ENCODE measurements at regions of chr17 and their contacts with region 1.

Region 1: DNA sequence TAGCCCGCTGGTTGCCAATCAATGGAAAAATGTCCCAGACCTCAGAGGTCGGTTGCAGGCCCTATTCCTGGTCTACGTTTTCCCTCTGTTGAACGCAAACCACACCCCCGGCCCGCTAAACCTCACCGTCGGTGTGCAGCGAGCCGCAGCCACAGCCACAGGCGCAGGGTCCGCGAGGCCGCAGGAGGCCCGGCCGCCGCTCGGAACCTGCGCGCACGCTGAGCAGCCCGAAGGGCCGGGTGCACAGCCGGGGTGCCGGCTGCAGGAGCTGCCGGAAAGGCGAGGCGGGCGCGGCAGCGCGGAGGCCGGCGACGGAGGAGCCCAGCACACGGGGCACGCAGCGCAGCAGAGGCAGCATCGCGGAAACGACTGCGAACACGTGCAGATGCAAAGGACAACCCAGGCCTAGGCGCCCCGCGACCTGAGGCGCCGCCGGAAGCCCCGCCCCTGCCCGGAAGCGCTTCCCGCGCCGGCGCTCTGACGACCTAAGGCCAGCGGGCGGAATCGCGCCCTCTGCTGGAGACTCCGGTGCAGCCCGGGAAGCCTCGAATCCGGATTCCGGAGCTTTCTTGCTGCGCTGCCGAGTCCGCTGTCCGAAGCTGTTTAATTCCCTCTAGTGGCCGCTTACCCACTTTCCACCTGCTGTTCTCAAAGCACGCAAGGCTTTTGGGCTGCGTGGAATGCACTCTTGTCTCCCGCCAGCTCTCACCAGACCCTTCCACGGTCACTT is at the start of gene C1QBP:
- DNase-seq: peak; percentile 95
- H3K4me3 Mint-ChIP-seq: peak within 1 kb of the TSS; percentile 82
- H3K27ac Mint-ChIP-seq: peak within 1 kb of the TSS; percentile 83
- H3K4me1 Mint-ChIP-seq: peaks cover 43% of the 10 kb centered on the region
- H3K27me3 Mint-ChIP-seq: no peaks in the 10 kb centered on the region
- total RNA-seq, gene C1QBP: 342 TPM

Region 2: DNA sequence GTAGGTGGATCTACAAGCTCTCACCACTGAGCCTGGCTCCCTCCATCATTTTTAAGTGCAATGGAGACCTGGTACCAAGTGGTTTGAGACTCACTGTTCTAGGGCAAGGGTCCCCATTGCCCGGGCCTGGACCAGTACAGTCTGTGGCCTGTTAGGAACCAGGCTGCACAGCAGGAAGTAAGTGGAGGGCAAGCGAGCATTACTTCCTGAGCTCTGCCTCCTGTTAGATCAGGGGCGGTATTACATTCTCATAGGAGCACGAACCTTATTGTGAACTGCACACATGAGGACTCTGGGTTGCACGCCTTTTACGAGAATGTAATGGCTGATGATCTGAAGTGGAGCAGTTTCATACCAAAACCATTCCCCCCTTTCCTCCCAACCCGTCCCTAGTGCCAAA is 240.4 kb before region 1 on chr17:
- CTCF ChIA-PET with region 1: interaction called, 4 read pairs
- POLR2A ChIA-PET with region 1: no interaction called
- intact Hi-C with region 1: loop called (anchors 5 kb)
- DNase-seq: no peak
- H3K4me3 Mint-ChIP-seq: no peak overlapping the region
- H3K27ac Mint-ChIP-seq: no peak overlapping the region
- H3K4me1 Mint-ChIP-seq: no peaks in the 10 kb centered on the region
- H3K27me3 Mint-ChIP-seq: no peaks in the 10 kb centered on the region

Region 3: GRCh38 chr17:5281814-5282653 is 156.8 kb before region 1 on chr17 and contains the start of gene RABEP1:
- CTCF ChIA-PET with region 1: interaction called, 5 read pairs
- POLR2A ChIA-PET with region 1: interaction called, 12 read pairs
- intact Hi-C with region 1: no loop called
- DNase-seq: peak; percentile 96
- H3K4me3 Mint-ChIP-seq: peak within 1 kb of the TSS; percentile 85
- H3K27ac Mint-ChIP-seq: peak within 1 kb of the TSS; percentile 86
- H3K4me1 Mint-ChIP-seq: peaks cover 35% of the 10 kb centered on the region
- H3K27me3 Mint-ChIP-seq: no peaks in the 10 kb centered on the region
- total RNA-seq, gene RABEP1: 60.7 to 60.8 TPM

Region 4: GRCh38 chr17:5405400-5405799 is 33.5 kb before region 1 on chr17:
- CTCF ChIA-PET with region 1: interaction called, 14 read pairs
- POLR2A ChIA-PET with region 1: no interaction called
- intact Hi-C with region 1: no loop called
- DNase-seq: no peak
- H3K4me3 Mint-ChIP-seq: no peak overlapping the region
- H3K27ac Mint-ChIP-seq: no peak overlapping the region
- H3K4me1 Mint-ChIP-seq: peaks cover 18% of the 10 kb centered on the region
- H3K27me3 Mint-ChIP-seq: no peaks in the 10 kb centered on the region

Region 5: GRCh38 chr17:5419356-5419958 is 19.4 kb before region 1 on chr17 and contains the start of gene NUP88:
- CTCF ChIA-PET with region 1: interaction called, 26 read pairs
- POLR2A ChIA-PET with region 1: interaction called, 30 read pairs
- intact Hi-C with region 1: loop called (anchors 1 kb)
- DNase-seq: peak; percentile 98
- H3K4me3 Mint-ChIP-seq: peak within 1 kb of the TSS; percentile 99
- H3K27ac Mint-ChIP-seq: peak within 1 kb of the TSS; percentile 98
- H3K4me1 Mint-ChIP-seq: peaks cover 50% of the 10 kb centered on the region
- H3K27me3 Mint-ChIP-seq: no peaks in the 10 kb centered on the region
- total RNA-seq, gene NUP88: 110 to 113 TPM

Region 6: GRCh38 chr17:5486204-5487124 is 47.6 kb after region 1 on chr17 and contains the start of gene MIS12:
- CTCF ChIA-PET with region 1: interaction called, 13 read pairs
- POLR2A ChIA-PET with region 1: interaction called, 6 read pairs
- intact Hi-C with region 1: loop called (anchors 5 kb)
- DNase-seq: peak; percentile 99
- H3K4me3 Mint-ChIP-seq: peak within 1 kb of the TSS; percentile 88
- H3K27ac Mint-ChIP-seq: peak within 1 kb of the TSS; percentile 98
- H3K4me1 Mint-ChIP-seq: peaks cover 54% of the 10 kb centered on the region
- H3K27me3 Mint-ChIP-seq: no peaks in the 10 kb centered on the region
- total RNA-seq, gene MIS12: 30.4 to 32.0 TPM